Vagina (tissue), 2 donors: ENCODE measurements at regions of chr11 and their contacts with region 1.

Region 1: DNA sequence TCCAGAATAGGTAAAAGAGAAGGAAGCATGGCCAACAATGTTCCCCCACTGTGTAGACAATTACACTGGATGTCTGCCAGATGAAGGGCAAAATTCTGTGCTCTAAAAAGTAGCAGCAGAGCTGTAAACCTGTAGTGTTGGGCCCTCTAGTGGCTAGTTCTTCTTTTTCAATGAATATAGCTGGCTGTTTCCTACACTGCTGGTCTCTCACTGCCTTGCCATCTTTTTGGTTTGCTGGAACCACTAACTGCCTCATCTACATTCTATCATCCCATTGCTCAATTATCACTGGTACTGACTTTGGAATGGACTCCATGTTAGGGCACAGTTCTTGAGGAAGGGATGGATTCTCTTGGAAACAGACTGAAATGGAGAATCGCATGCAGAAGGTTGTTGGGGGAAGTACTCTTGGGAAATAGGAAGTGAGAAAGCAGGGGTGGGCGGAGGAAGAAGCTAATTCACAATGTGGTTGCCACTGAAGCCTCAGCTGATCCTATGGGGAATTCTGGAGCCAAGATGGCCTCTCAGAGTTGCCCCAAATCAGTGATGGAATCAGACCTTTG is 17.9 kb downstream of the KCNE3 start:
- DNase-seq: no peak
- H3K4me3 ChIP-seq: no peak overlapping the region
- H3K27ac ChIP-seq: no peak overlapping the region
- H3K4me1 ChIP-seq: peaks cover 4% of the 10 kb centered on the region
- H3K27me3 ChIP-seq: no peaks in the 10 kb centered on the region
- CTCF ChIP-seq: peak; percentile 76 to 84 (median 77)
- POLR2A ChIP-seq: no peak

Region 2: GRCh38 chr11:74255741-74256369 is 193.6 kb before region 1 on chr11:
- intact Hi-C with region 1: loop called (anchors 5 kb)
- DNase-seq: no peak
- H3K4me3 ChIP-seq: no peak overlapping the region
- H3K27ac ChIP-seq: no peak overlapping the region
- H3K4me1 ChIP-seq: peaks cover 15% of the 10 kb centered on the region
- H3K27me3 ChIP-seq: no peaks in the 10 kb centered on the region
- CTCF ChIP-seq: peak; percentile 67 to 92 (median 76)
- POLR2A ChIP-seq: no peak

Region 3: DNA sequence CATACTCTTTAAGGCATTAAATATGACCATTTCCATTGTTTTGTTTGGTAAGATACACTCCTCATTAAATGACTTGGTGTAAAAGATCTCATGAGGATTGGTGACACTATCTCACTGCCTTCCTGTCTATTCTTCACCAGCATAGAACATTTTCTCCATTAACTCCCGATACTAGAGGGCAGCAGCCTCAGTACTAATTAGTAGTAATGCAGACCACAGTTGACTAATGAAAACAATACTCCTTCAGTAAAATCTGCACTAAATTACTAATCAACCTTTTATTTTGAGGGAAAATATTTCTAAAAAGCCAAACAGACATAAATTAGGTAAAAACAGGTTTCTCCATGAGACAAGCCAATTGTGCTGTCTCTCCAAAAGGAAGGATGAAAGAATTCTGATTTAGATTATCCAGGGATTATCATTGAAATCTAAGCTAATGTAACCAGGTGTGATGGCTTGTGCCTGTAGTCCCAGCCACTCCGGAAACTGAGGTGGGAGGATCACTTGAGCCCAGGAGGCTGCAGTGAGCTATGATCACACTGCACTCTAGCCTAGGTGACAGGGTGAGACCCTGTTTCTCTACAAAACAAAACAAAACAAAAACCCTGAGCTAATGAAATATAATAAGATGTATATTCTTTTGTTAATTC is 60.6 kb before region 1 on chr11:
- intact Hi-C with region 1: loop called (anchors 5 kb)
- DNase-seq: no peak
- H3K4me3 ChIP-seq: no peak overlapping the region
- H3K27ac ChIP-seq: no peak overlapping the region
- H3K4me1 ChIP-seq: peaks cover 7% of the 10 kb centered on the region
- H3K27me3 ChIP-seq: no peaks in the 10 kb centered on the region
- CTCF ChIP-seq: peak; percentile 31 to 67 (median 64)
- POLR2A ChIP-seq: no peak

Region 4: DNA sequence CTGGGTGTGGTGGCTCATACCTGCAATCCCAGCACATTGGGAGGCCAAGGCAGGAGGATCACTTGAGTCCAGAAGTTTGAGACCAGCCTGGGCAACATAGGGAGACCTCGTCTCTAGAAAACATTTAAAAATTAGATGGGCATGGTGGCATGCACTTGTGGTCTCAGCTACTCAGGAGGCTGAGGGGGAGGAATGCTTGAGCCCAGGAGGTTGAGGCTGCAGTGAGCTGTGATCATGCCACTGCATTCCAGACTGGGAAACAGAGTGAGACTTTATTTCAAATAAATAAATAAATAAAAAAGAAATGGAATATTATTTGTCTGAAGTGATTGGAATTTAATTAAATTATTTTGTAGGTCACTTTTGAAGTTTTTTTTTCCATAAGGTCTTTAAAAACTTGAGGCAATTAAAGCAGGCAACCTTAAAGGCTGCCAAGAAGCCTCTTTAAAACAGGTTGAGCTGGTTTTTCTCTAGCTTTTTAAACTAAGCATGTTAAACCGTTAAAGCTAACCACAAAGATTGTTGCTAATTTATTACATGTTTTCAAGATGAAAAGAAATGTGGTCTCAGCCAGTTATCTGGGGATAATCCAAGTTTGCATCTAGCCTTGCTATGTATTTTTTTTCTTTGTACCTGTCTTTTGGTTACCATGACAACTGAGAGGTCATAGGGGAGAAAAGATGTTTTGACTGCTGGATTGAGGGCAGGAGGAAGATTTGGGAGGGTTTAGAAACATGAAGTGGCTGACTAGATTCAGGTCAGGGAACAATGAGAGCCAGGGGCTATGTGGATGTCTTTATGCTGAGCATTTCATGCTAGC is 32.3 kb before region 1 on chr11:
- intact Hi-C with region 1: loop called (anchors 1 kb)
- DNase-seq: no peak
- H3K4me3 ChIP-seq: no peak overlapping the region
- H3K27ac ChIP-seq: peak overlapping the region; percentile 79
- H3K4me1 ChIP-seq: peaks cover 39% of the 10 kb centered on the region
- H3K27me3 ChIP-seq: no peaks in the 10 kb centered on the region
- CTCF ChIP-seq: no peak
- POLR2A ChIP-seq: no peak

Region 5: DNA sequence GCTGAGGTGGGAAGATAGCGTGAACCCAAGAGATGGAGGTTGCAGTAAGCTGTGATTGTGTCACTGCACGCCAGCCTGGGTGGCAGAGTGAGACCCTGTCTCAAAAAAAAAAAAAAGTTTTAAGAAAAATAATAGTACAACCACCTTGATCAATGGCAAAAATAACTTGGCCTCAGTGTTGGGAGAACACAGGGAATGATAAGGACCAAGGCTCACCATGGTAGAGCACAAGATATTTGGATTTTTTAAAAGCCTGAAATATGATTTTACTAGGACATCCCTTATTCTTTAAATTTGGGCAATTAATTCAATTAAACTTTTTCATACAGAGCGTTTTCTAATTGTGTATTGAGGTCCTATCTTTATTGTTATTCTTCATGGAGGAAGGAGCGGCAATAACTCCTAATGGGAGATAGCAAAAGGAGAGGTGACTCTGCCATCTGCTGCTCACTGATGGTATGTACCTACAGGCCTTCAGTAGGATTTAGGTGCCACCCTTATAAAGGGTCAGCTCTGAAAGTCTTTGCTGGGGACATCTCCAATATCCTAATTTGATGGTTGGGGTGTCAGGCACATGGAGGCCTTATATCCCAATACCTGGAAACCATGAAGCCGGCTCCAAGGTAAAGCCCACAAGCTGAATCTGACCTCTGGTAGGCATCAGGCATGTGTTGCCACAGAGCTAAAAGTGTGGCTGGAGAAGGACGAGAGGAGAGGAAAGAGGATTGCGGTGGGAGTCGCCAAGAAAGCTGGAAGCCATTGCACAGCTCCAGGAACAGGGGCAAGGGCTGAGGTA is 121.0 kb after region 1 on chr11:
- intact Hi-C with region 1: loop called (anchors 5 kb)
- DNase-seq: no peak
- H3K4me3 ChIP-seq: no peak overlapping the region
- H3K27ac ChIP-seq: no peak overlapping the region
- H3K4me1 ChIP-seq: no peaks in the 10 kb centered on the region
- H3K27me3 ChIP-seq: no peaks in the 10 kb centered on the region
- CTCF ChIP-seq: peak; percentile 61 to 72 (median 71)
- POLR2A ChIP-seq: no peak

Region 6: GRCh38 chr11:76361374-76361773 is 1911.9 kb after region 1 on chr11:
- intact Hi-C with region 1: no loop called
- DNase-seq: no peak
- H3K4me3 ChIP-seq: no peak overlapping the region
- H3K27ac ChIP-seq: no peak overlapping the region
- H3K4me1 ChIP-seq: peaks cover 11% of the 10 kb centered on the region
- H3K27me3 ChIP-seq: no peaks in the 10 kb centered on the region
- CTCF ChIP-seq: no peak
- POLR2A ChIP-seq: no peak